Calu3 (cell line): ENCODE measurements at regions of chr12 and their contacts with region 1.

Region 1: DNA sequence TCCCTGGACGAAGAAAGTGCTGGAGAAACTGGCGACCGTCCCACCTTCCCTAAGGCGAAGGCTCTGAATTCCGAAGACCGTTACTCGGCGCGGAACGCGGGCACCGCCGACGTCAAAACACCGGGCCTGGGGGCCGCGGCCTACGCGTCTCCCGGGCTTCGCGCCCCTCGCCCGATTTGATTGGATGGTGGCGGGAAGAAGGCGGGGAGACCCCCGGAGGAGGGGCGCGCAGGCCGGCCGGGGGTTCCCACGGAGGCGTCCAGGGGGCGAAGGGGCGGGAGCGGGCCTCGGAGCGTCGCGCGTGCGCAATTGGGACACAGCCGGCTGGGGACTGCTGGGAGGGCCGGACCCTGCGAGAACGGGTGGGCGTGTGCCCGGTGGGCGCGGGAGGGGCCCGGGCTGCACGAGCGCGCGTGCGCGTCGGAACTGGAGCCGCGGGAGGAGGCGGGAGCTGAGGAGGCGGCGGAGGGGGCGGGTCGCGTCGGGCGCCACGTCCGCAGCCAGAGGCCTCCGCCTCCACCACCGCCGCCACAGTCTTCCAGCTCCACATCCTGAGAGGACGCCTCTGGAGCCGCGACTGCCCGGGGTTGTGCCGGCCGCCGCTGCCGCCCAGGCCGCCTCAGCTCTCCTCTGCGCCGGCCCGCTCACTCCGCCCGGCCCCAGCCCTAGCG is at the start of gene TMEM263:
- DNase-seq: peak; percentile 96
- H3K4me3 Mint-ChIP-seq: peak within 1 kb of the TSS; percentile 77
- H3K27ac Mint-ChIP-seq: peak within 1 kb of the TSS; percentile 89
- H3K4me1 Mint-ChIP-seq: peaks cover 7% of the 10 kb centered on the region
- H3K27me3 Mint-ChIP-seq: peaks cover 20% of the 10 kb centered on the region
- CTCF ChIP-seq: no peak
- total RNA-seq, gene TMEM263: 46.3 and 47.6 TPM in 2 replicates

Region 2: GRCh38 chr12:106973545-106973944 is 18.0 kb after region 1 on chr12:
- CTCF ChIA-PET with region 1: interaction called, 4 read pairs
- intact Hi-C with region 1: loop called (anchors 2 kb)
- DNase-seq: no peak
- H3K4me3 Mint-ChIP-seq: no peak overlapping the region
- H3K27ac Mint-ChIP-seq: no peak overlapping the region
- H3K4me1 Mint-ChIP-seq: peaks cover 24% of the 10 kb centered on the region
- H3K27me3 Mint-ChIP-seq: no peaks in the 10 kb centered on the region
- CTCF ChIP-seq: no peak

Region 3: DNA sequence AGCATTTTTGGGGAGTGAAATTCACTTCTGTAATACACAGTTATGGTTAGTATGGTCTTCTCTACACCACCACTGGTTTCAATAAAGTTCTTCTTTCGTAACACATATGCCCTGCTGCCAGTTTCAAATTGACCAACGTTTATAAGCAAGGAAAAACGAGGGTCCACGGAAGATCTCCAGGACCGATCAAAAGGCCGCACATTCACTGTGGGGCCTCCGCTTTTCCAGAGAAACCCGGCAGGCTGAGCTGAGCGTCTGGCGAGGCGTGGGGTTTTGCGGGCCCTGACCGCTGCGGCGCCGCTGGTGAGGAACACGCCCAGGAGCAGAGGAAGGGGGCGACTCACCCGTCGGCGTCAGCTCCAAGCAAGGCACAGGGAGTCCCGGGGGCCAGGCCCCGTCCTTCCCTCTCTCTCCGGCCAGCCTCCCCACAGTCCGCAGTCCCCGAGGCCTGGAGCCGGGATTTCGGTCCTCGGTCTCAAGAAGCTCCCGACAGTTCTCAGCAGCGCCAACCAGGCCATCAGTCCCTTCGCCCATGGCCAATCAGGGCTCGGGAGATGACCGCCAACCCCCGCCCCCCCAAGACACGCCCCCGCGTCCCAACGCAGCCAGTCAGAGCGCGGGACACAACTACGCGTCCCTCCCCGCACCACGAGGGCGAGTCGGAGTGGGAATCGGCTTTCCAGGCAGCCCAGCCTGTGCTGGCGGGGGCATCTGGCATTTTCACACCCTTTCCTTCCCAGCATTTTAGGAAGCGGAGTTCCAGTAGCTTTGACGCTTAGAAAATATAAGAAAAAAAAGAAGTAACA is 31.3 kb after region 1 on chr12 and contains the start of gene MTERF2:
- CTCF ChIA-PET with region 1: interaction called, 13 read pairs
- intact Hi-C with region 1: no loop called
- DNase-seq: peak; percentile 93
- H3K4me3 Mint-ChIP-seq: peak within 1 kb of the TSS; percentile 95
- H3K27ac Mint-ChIP-seq: peak within 1 kb of the TSS; percentile 90
- H3K4me1 Mint-ChIP-seq: peaks cover 8% of the 10 kb centered on the region
- H3K27me3 Mint-ChIP-seq: no peaks in the 10 kb centered on the region
- CTCF ChIP-seq: no peak
- total RNA-seq, gene MTERF2: 10.6 and 12.3 TPM in 2 replicates

Region 4: DNA sequence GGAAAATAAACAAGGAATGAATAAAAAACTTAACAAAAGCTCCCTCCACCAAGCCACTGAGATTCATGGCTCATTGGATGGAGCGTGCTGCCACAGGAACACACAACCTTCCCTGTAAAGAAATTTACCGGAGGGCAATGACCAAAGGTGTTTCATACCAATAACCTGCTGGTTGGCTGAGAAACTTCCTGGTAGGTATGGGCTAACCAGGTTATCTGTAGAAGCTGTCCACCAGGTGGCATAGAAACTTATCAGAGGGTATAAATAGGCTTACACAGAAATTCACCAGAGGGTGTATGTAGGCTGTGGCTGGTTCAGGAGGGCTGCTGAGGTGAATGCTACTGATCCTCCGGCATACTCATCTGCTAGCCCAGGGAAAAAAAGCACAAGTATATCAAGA is 58.5 kb after region 1 on chr12:
- CTCF ChIA-PET with region 1: no interaction called
- intact Hi-C with region 1: no loop called
- DNase-seq: peak; percentile 71
- H3K4me3 Mint-ChIP-seq: no peak overlapping the region
- H3K27ac Mint-ChIP-seq: no peak overlapping the region
- H3K4me1 Mint-ChIP-seq: no peaks in the 10 kb centered on the region
- H3K27me3 Mint-ChIP-seq: no peaks in the 10 kb centered on the region
- CTCF ChIP-seq: peak; percentile 53